Spleen (tissue), 13 donors: ENCODE measurements at regions of chr2 and their contacts with region 1.

Region 1: GRCh38 chr2:24084386-24085361 is at the start of gene TP53I3:
- DNase-seq: peak; percentile 98
- H3K4me3 ChIP-seq: peak within 1 kb of the TSS; percentile 41 to 76 (median 54)
- H3K27ac ChIP-seq: peak within 1 kb of the TSS; percentile 69 to 92 (median 88)
- H3K4me1 ChIP-seq: peaks cover 6 to 51% (median 24%) of the 10 kb centered on the region in 6 donors
- H3K27me3 ChIP-seq: no peaks in the 10 kb centered on the region
- CTCF ChIP-seq: peak; percentile 92 to 99 (median 97)
- POLR2A ChIP-seq: no peak
- total RNA-seq, gene TP53I3: 7.1 to 16.4 (median 8.8) TPM

Region 2: DNA sequence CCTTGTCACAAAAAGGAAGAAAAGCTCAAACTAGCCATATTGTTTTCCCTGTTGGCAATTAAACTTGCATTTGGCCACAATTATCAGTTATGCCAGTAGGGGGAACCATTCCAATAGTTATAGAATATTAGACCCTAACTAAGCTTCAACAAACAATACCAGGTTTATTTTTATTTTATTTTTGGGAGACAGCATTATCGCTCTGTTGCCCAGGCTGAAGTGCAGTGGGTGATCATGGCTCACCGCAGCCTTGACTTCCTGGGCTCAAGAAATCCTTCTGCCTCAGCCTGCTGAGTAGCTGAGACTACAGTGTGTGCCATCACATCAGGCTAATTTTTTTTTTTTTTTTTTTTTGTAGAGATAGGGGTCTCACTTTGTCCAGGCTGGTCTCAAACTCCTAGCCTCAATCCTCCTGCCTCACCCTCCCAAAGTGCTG is 259.9 kb before region 1 on chr2:
- intact Hi-C with region 1: loop called (anchors 5 kb)
- DNase-seq: no peak
- H3K4me3 ChIP-seq: no peak overlapping the region
- H3K27ac ChIP-seq: no peak overlapping the region
- H3K4me1 ChIP-seq: peaks cover 0 to 12% (median 3%) of the 10 kb centered on the region in 6 donors
- H3K27me3 ChIP-seq: no peaks in the 10 kb centered on the region
- CTCF ChIP-seq: peak; percentile 36 to 77 (median 71)
- POLR2A ChIP-seq: no peak

Region 3: DNA sequence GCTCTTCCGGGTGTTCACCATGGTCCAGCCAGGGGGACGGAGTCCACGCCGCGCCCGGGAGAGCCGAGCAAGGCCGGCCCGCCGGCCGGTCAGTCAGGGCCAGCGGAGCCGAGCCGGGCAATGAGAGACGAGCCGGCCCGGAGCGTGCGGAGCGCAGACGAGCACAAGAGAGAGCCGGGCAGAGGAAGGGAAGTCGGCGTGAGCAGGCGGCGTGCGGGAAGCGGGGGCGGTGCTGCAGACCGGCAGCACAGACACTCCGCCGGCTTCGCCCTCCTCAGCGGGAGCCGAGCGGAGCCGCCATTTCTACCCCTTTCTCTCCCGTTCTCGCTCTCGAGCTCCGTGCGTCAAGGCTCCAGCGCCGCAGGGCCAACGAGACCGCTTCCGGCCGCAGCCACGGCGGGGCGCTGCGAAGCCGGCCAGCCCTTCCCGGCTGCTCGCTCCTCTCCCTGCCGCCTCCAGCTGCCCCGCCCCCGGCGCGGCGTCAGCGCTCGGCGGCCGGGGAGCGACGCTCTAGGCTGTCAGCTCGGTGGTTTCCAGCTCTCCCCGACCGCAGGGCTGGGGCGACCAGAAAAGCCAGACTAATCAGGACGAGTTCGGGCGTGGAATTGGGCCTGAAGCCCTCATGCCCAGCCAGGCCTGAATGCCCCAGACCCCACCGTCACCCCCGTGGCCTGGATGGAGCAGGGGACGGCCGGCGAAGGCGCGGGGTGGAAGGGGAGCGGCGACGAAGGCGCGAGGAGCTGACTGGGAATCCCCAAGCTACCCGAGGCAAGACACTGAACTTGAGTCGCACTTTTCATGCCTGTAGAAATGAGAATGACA is 157.7 kb before region 1 on chr2 and contains the start of gene ATAD2B:
- intact Hi-C with region 1: loop called (anchors 5 kb)
- DNase-seq: peak; percentile 99
- H3K4me3 ChIP-seq: peak within 1 kb of the TSS; percentile 69 to 97 (median 86)
- H3K27ac ChIP-seq: peak within 1 kb of the TSS; percentile 91 to 100 (median 98)
- H3K4me1 ChIP-seq: peaks cover 24 to 66% (median 44%) of the 10 kb centered on the region in 6 donors
- H3K27me3 ChIP-seq: no peaks in the 10 kb centered on the region
- CTCF ChIP-seq: peak; percentile 43 to 97 (median 89)
- POLR2A ChIP-seq: peak in 2 of 3 donors; percentile 15 to 27
- total RNA-seq, gene ATAD2B: 33.4 to 61.2 (median 37.9) TPM

Region 4: DNA sequence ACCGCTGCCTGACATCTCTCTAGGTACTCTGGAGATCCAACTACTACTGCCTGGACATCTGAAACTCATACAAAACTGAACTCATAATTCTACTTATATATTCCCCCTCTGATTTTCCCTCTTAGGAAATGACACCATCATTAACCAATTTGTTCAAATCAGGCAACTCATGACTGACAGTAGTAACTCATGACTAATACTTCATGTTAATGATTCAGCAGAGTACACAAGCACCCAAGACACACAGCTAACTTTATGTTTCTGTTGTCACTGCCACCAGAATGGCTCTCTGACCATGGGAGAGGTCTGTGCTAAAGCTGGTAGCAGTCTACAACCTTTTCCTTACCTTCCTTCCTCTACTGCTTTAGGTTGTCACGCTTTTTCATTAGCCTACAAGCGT is 184.6 kb after region 1 on chr2:
- intact Hi-C with region 1: no loop called
- DNase-seq: no peak
- H3K4me3 ChIP-seq: no peak overlapping the region
- H3K27ac ChIP-seq: no peak overlapping the region
- H3K4me1 ChIP-seq: no peaks in the 10 kb centered on the region
- H3K27me3 ChIP-seq: no peaks in the 10 kb centered on the region
- CTCF ChIP-seq: no peak
- POLR2A ChIP-seq: no peak